Right ventricle myocardium superior (tissue), 1 donor: ENCODE measurements at regions of chr20 and their contacts with region 1.

Region 1: DNA sequence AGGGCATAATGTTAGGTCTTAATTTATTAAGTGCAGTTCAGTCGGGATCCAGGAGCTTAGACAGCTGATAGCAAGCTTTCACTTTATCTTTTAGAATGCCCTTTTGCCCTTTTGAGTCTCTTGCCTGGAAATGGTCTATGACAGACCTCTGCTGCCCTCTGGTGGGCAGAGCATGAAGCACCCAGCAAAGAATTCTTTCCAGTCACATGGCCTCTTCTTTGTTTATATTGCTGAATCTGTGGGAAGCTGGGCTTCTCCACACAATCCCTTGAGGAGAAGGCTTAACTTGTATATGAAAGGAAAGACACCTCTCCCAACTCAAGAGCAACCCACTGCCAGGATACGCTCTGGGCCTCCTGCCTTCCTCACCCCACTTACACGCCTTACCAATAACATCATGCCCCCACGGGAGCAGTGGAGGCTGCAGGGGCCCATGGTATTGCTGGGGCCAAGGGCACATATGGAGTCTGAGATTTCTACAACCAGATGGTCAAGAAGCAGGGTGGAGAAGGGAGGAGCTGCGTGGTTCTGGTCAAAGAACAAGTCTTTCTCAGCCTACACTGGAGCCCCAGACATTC is 20.4 kb downstream of the WFDC3 start:
- DNase-seq: peak; percentile 80
- ATAC-seq: peak; percentile 91

Region 2: GRCh38 chr20:45318948-45319347 is 452.3 kb before region 1 on chr20:
- intact Hi-C with region 1: loop called (anchors 2 kb)
- DNase-seq: no peak
- ATAC-seq: no peak